Cardiac septum (tissue), 1 donor: ENCODE measurements at regions of chr7 and their contacts with region 1.

Region 1: DNA sequence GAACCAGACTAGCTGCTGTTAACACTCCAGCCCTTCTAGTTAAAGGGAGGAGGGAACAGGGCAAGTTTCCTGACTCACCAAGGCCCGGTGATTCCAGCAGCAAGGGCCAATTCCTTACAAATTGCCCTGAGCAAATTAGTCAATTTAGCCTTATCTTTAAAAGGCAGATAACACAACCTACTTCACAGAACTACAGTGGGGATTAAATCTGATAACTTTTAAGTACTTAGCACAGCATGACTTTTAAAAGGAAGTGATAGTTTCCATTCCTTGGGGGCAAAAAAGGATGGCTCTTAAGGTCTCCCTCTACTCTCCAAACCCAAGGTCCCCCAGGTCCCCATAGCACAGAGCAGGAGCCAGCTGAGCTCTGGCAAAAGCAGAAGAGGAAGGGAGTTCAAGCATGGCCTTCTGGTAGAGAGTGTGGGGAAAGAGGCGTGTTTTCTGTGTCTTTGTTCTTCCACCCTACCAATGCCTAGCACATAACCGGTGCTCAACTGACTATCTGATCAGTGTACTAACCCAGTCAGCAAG is 4.0 kb downstream of the CDCA7L start:
- DNase-seq: no peak

Region 2: DNA sequence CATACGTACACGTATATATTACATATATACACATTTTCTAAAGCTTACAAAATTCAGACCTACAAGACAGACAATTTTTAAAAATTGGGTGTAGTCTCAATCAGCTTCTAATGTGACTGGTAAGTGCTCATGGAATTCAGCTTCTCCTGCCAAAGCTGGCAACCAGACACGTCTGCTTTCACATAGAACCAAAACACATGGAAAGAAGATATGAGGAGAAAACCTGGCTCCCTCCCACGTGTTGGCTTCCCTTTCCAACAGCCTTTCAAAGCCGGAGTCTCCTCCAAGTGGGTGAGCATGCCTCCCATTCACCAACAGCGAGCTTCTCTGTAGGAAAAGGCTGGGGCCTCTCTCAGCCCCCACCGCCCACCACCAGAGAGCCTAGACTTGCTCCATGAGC is 29.4 kb before region 1 on chr7:
- intact Hi-C with region 1: loop called (anchors 2 kb)
- DNase-seq: peak; percentile 78